Caco-2 (cell line): ENCODE measurements at regions of chr1 and their contacts with region 1.

Region 1: GRCh38 chr1:168603501-168604110 is 27.2 kb downstream of the XCL1 start:
- DNase-seq: peak; percentile 79 to 81
- H3K4me3 ChIP-seq: no peak overlapping the region
- H3K4me3 Mint-ChIP-seq: no peak overlapping the region
- H3K27ac Mint-ChIP-seq: no peak overlapping the region
- H3K4me1 ChIP-seq: peaks cover 4% of the 10 kb centered on the region; the same call in 1 of the 2 replicates
- H3K4me1 Mint-ChIP-seq: peaks cover 11% of the 10 kb centered on the region
- H3K27me3 ChIP-seq: no peaks in the 10 kb centered on the region
- H3K27me3 Mint-ChIP-seq: no peaks in the 10 kb centered on the region
- CTCF ChIP-seq: peak; percentile 87 to 89

Region 2: DNA sequence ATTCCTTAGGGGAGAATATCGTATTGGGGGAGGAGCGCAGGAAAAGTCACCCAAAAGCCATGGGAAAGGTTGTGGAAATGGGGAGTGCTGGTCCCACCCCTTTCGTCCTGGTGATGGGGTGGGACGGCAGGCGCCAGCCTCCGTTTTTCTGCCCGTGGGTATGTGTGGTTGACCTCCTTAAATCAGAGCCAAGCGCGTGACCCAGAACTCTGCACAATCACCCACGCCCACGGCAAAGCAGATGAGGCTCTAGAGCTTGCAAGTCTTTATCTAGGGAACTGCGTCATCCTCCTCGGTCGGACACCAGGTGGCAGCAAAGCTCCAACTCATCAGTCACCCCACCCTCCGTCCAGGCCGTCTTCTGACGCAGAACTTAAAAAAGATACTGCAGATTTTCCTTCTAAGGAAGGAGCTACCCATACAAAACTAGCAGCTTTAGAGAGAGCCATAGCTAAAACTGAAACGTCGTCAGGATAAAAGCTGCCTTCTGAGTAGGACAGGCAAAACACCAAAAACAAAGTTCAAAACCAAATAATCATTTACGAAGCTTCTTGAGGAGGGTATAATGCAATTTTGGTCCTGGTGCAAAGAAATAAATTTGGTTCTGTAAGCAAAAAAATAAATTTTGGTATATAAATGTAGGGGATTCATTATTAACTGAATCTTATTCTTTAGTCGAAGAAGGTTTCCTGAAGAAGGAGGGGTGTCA is 260.9 kb before region 1 on chr1:
- CTCF ChIA-PET with region 1: interaction called, 11 read pairs
- POLR2A ChIA-PET with region 1: no interaction called
- intact Hi-C with region 1: no loop called
- DNase-seq: peak; percentile 84
- H3K4me3 ChIP-seq: peak overlapping the region; percentile 15
- H3K4me3 Mint-ChIP-seq: peak overlapping the region; percentile 60
- H3K27ac Mint-ChIP-seq: no peak overlapping the region
- H3K4me1 ChIP-seq: peaks cover 5% of the 10 kb centered on the region; the same call in 1 of the 2 replicates
- H3K4me1 Mint-ChIP-seq: peaks cover 8% of the 10 kb centered on the region
- H3K27me3 ChIP-seq: no peaks in the 10 kb centered on the region
- H3K27me3 Mint-ChIP-seq: no peaks in the 10 kb centered on the region
- CTCF ChIP-seq: peak; percentile 77 to 86

Region 3: DNA sequence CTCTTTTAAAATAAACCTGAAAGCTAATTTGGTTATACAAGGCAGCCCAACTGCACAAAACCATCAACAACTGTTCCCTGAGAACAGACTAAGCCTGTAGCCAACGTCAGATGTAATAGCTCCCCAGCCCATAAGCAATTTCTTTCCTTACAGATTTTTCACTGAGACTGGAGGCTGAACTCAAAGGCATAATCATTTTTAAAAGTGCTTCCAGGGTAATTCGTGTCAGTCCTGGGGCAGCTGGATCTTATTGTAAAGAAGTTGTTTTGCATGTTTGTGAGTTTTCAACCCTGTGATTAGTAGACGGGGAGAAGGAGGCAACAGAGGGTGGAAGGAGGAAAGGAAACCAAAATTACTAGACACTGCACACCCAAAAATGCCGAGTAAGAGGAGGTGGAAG is 122.2 kb after region 1 on chr1:
- CTCF ChIA-PET with region 1: interaction called, 10 read pairs
- POLR2A ChIA-PET with region 1: no interaction called
- intact Hi-C with region 1: no loop called
- DNase-seq: no peak
- H3K4me3 ChIP-seq: no peak overlapping the region
- H3K4me3 Mint-ChIP-seq: no peak overlapping the region
- H3K27ac Mint-ChIP-seq: no peak overlapping the region
- H3K4me1 ChIP-seq: no peaks in the 10 kb centered on the region
- H3K4me1 Mint-ChIP-seq: no peaks in the 10 kb centered on the region
- H3K27me3 ChIP-seq: no peaks in the 10 kb centered on the region
- H3K27me3 Mint-ChIP-seq: no peaks in the 10 kb centered on the region
- CTCF ChIP-seq: no peak

Region 4: GRCh38 chr1:168987332-168987731 is 383.7 kb after region 1 on chr1:
- CTCF ChIA-PET with region 1: no interaction called
- POLR2A ChIA-PET with region 1: no interaction called
- intact Hi-C with region 1: loop called (anchors 10 kb)
- DNase-seq: peak in 1 of 2 experiments; percentile 10
- H3K4me3 ChIP-seq: no peak overlapping the region
- H3K4me3 Mint-ChIP-seq: no peak overlapping the region
- H3K27ac Mint-ChIP-seq: no peak overlapping the region
- H3K4me1 ChIP-seq: peaks cover 8% of the 10 kb centered on the region
- H3K4me1 Mint-ChIP-seq: peaks cover 17% of the 10 kb centered on the region
- H3K27me3 ChIP-seq: no peaks in the 10 kb centered on the region
- H3K27me3 Mint-ChIP-seq: no peaks in the 10 kb centered on the region
- CTCF ChIP-seq: no peak

Region 5: GRCh38 chr1:169271098-169271497 is 667.5 kb after region 1 on chr1:
- CTCF ChIA-PET with region 1: interaction called, 3 read pairs
- POLR2A ChIA-PET with region 1: no interaction called
- intact Hi-C with region 1: loop called (anchors 5 kb)
- DNase-seq: no peak
- H3K4me3 ChIP-seq: no peak overlapping the region
- H3K4me3 Mint-ChIP-seq: no peak overlapping the region
- H3K27ac Mint-ChIP-seq: no peak overlapping the region
- H3K4me1 ChIP-seq: no peaks in the 10 kb centered on the region
- H3K4me1 Mint-ChIP-seq: peaks cover 7% of the 10 kb centered on the region
- H3K27me3 ChIP-seq: no peaks in the 10 kb centered on the region
- H3K27me3 Mint-ChIP-seq: no peaks in the 10 kb centered on the region
- CTCF ChIP-seq: peak; percentile 19 to 21